ENCODE measurements at regions of chr16 and their contacts with region 1.

Region 1: GRCh38 chr16:30957456-30958174 is at the start of gene SETD1A:
- DNase-seq: peak; percentile 99
- ATAC-seq: peak; percentile 89
- H3K4me3 Mint-ChIP-seq: peak within 1 kb of the TSS; percentile 93
- H3K27ac Mint-ChIP-seq: peak within 1 kb of the TSS; percentile 99
- H3K4me1 Mint-ChIP-seq: peaks cover 37% of the 10 kb centered on the region
- H3K27me3 Mint-ChIP-seq: no peaks in the 10 kb centered on the region
- total RNA-seq, gene SETD1A: 18.5 to 21.7 TPM

Region 2: GRCh38 chr16:30761928-30762810 is 195.4 kb before region 1 on chr16 and contains the starts of genes CFAP119 and RNF40:
- CTCF ChIA-PET with region 1: no interaction called
- POLR2A ChIA-PET with region 1: no interaction called
- intact Hi-C with region 1: loop called in 1 of 2 experiments (anchors 1 kb)
- DNase-seq: peak; percentile 94
- ATAC-seq: peak; percentile 98
- H3K4me3 Mint-ChIP-seq: peak within 1 kb of the TSS; percentile 90
- H3K27ac Mint-ChIP-seq: peak within 1 kb of the TSS; percentile 83
- H3K4me1 Mint-ChIP-seq: peaks cover 25% of the 10 kb centered on the region
- H3K27me3 Mint-ChIP-seq: no peaks in the 10 kb centered on the region
- total RNA-seq, gene CFAP119: 1.7 to 3.1 TPM
- total RNA-seq, gene RNF40: 72.3 to 85.5 TPM

Region 3: DNA sequence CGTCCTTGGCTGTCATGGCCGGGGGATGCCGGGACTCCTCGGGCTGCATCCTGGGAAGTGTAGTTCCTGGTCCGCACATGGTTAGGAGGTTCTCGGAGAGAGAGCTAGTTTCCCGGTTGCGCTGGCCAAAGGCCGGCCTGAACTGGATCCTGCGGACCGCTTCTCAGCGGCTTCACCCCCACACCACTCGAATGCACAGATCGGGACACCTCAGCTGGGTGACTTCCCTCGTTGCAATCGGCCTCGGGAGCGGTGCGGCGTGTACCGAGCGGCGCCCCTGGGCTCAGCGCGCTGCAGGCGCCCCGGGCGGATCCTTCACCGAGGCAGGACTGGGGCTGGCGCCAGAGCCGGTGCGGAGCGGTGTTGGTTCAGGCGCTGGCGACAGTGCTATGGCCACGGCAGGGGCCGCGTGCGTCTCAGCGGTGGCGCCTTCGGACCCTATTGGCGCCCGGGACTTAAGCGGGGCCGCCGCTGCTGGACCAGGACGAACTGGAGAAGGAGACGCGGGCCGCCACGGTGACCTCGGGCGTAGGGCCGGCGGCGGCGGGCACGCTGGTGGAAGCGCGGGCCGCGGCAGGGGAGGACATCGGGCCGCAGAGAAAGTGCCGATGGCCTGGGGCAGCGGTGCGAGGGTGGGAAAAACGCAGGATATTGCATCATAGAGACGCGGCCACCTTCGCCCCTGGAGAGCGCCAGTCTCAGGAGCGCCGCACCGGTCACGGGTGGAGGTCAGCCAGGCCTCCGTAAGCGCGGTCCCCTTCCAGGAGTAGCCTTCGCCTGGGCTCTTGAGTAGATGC is 182.0 kb before region 1 on chr16:
- CTCF ChIA-PET with region 1: no interaction called
- POLR2A ChIA-PET with region 1: no interaction called
- intact Hi-C with region 1: no loop called
- DNase-seq: peak; percentile 80
- ATAC-seq: peak; percentile 85
- H3K4me3 Mint-ChIP-seq: peak overlapping the region; percentile 83
- H3K27ac Mint-ChIP-seq: peak overlapping the region; percentile 93
- H3K4me1 Mint-ChIP-seq: peaks cover 15% of the 10 kb centered on the region
- H3K27me3 Mint-ChIP-seq: no peaks in the 10 kb centered on the region

Region 4: GRCh38 chr16:30893744-30894539 is 63.7 kb before region 1 on chr16 and contains the start of gene BCL7C:
- CTCF ChIA-PET with region 1: no interaction called
- POLR2A ChIA-PET with region 1: no interaction called
- intact Hi-C with region 1: loop called in 1 of 2 experiments (anchors 1 kb)
- DNase-seq: peak; percentile 92
- ATAC-seq: peak; percentile 74
- H3K4me3 Mint-ChIP-seq: peak within 1 kb of the TSS; percentile 84
- H3K27ac Mint-ChIP-seq: peak within 1 kb of the TSS; percentile 88
- H3K4me1 Mint-ChIP-seq: peaks cover 35% of the 10 kb centered on the region
- H3K27me3 Mint-ChIP-seq: no peaks in the 10 kb centered on the region
- total RNA-seq, gene BCL7C: 19.5 to 20.4 TPM

Region 5: DNA sequence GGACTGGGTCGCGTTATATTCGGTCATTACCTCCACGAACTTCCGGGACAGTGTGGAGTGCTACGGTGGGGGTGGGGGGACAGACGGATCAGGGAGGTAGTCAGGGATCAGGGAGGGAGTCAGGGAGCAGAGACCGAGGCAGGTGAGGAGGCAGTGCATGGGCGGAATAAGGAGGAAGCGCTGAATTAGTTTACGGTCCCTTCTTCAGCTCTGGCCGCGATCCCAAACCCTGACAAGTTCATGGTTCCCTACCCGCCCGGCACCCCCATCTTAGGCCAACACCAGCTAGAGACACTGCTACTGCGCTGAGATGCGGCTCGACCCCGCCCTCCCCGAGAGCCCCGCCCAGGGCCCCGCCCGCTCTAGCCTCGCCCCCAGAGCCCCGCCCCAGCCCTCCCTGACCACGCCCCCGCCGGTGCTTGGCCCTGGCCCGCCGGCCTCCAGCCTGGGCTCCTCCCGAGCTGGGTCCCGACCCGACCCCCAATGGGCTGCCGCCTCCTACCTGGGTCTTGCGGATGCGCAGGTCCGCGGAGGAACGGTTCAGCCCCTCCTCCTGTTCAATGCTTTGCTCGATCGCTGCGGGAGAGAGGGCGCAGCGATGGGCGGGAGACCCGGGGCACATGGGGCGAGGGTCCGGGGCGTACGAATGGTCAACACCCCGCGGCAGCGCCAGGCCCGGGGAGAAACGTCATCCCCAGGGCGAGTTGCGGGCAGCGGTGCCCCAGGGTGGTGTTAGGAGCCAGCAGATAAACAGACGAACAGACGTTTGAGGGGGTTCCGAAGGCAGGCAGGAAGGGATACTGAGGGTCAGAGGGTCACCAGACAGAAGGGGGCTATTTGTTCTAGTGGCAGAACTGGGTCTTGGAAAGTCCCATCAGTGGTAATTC is 39.6 kb after region 1 on chr16:
- CTCF ChIA-PET with region 1: interaction called, 3 read pairs
- POLR2A ChIA-PET with region 1: no interaction called
- intact Hi-C with region 1: loop called in 1 of 2 experiments (anchors 1 kb)
- DNase-seq: peak; percentile 94
- ATAC-seq: peak; percentile 95
- H3K4me3 Mint-ChIP-seq: peak overlapping the region; percentile 72
- H3K27ac Mint-ChIP-seq: no peak overlapping the region
- H3K4me1 Mint-ChIP-seq: peaks cover 16% of the 10 kb centered on the region
- H3K27me3 Mint-ChIP-seq: peaks cover 3% of the 10 kb centered on the region

Region 6: DNA sequence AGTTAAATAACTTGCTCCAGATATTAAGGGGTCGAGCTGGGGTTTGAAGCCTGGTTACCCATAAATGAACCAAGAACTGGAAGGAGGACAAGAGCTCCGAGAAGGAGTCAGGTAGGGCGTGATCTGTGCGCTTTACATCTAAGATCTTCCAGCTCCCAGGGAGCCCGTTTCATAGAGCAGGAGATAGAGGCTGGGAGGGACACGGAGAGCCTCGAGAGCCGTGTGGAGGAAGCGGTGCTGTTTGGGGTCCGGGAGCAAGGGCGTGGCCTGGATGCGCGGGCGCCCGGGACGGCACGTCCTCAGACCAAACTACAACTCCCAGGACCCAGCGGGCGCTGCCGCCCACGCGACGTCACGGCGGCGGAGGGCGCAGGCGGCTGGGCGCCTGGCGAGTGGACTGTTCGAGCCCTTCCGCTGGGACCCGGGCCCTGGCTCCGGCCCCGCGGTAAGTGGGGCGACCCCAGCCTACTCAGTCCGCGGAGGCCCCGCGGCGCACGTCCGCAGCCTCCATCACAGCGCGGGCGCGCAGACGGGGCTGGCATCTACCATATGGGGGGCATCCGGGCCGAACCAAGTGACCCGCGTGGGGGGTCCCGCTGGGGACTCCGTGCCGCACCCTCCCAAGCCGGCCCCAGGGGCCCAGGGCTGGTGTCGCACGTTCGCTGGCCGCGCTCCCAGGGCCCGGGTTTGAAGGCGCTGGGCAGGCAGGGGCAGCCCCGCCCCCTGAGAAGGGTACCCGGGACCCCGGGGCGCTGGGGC is 150.6 kb after region 1 on chr16 and contains the start of gene BCKDK:
- CTCF ChIA-PET with region 1: no interaction called
- POLR2A ChIA-PET with region 1: no interaction called
- intact Hi-C with region 1: loop called in 1 of 2 experiments (anchors 2 kb)
- DNase-seq: peak; percentile 90
- ATAC-seq: peak; percentile 79
- H3K4me3 Mint-ChIP-seq: peak within 1 kb of the TSS; percentile 86
- H3K27ac Mint-ChIP-seq: peak within 1 kb of the TSS; percentile 96
- H3K4me1 Mint-ChIP-seq: peaks cover 22% of the 10 kb centered on the region
- H3K27me3 Mint-ChIP-seq: no peaks in the 10 kb centered on the region
- total RNA-seq, gene BCKDK: 50.0 to 53.3 TPM

Region 7: GRCh38 chr16:31179747-31180459 is 222.3 kb after region 1 on chr16 and contains the start of gene FUS:
- CTCF ChIA-PET with region 1: no interaction called
- POLR2A ChIA-PET with region 1: no interaction called
- intact Hi-C with region 1: loop called in 1 of 2 experiments (anchors 1 kb)
- DNase-seq: peak; percentile 94
- ATAC-seq: peak; percentile 56
- H3K4me3 Mint-ChIP-seq: peak within 1 kb of the TSS; percentile 95
- H3K27ac Mint-ChIP-seq: peak within 1 kb of the TSS; percentile 99
- H3K4me1 Mint-ChIP-seq: peaks cover 51% of the 10 kb centered on the region
- H3K27me3 Mint-ChIP-seq: no peaks in the 10 kb centered on the region
- total RNA-seq, gene FUS: 647 to 648 TPM

Measured in activated CD4-positive, alpha-beta T cell treated with anti-CD3 and anti-CD28 coated beads for 36 hours (primary cell).